PC-3 (cell line): ENCODE measurements at regions of chr1 and their contacts with region 1.

Region 1: GRCh38 chr1:39609618-39610331 is 29.7 kb downstream of the HEYL start:
- DNase-seq: peak; percentile 34
- ATAC-seq: peak; percentile 31; the same call in 1 of the 2 replicates
- H3K4me3 ChIP-seq: no peak overlapping the region
- H3K27ac ChIP-seq: no peak overlapping the region
- H3K4me1 ChIP-seq: peaks cover 6% of the 10 kb centered on the region; the same call in 1 of the 2 replicates
- H3K27me3 ChIP-seq: no peaks in the 10 kb centered on the region
- CTCF ChIP-seq: peak; percentile 82

Region 2: GRCh38 chr1:39508857-39509305 is 100.9 kb before region 1 on chr1:
- CTCF ChIA-PET with region 1: no interaction called
- POLR2A ChIA-PET with region 1: no interaction called
- intact Hi-C with region 1: no loop called
- DNase-seq: no peak
- ATAC-seq: 0 out of 2 replicates have a peak, but pooled peaks have one; percentile 23
- H3K4me3 ChIP-seq: no peak overlapping the region
- H3K27ac ChIP-seq: no peak overlapping the region
- H3K4me1 ChIP-seq: no peaks in the 10 kb centered on the region
- H3K27me3 ChIP-seq: no peaks in the 10 kb centered on the region
- CTCF ChIP-seq: no peak

Region 3: DNA sequence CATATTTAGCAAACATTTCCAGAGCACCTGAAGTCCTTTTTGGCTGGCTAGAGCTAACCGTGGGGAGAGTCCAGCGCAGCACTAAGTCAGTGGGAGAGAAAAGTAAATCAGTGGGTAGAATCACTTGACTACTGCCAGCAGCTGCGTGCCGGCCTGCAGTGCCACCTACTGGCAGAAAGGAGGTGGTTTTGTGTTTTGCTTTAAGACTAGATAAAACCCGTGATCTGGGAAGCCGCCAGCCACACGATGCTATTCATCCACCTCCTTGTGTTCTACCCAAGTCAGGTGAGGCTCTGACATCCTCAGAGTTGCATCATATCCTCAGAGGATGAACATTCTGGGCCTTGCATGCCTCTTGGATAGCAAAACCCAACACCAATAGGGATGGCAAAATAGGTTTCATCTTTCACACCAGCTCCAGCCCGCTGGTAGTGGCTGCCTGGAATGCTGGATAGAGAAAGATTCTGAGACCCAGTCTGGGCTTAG is 43.8 kb after region 1 on chr1:
- CTCF ChIA-PET with region 1: interaction called, 46 read pairs
- POLR2A ChIA-PET with region 1: no interaction called
- intact Hi-C with region 1: loop called (anchors 1 kb)
- DNase-seq: peak; percentile 81
- ATAC-seq: peak; percentile 88
- H3K4me3 ChIP-seq: no peak overlapping the region
- H3K27ac ChIP-seq: no peak overlapping the region
- H3K4me1 ChIP-seq: no peaks in the 10 kb centered on the region
- H3K27me3 ChIP-seq: no peaks in the 10 kb centered on the region
- CTCF ChIP-seq: peak; percentile 92